ENCODE measurements at regions of chr7 and their contacts with region 1.

Region 1: DNA sequence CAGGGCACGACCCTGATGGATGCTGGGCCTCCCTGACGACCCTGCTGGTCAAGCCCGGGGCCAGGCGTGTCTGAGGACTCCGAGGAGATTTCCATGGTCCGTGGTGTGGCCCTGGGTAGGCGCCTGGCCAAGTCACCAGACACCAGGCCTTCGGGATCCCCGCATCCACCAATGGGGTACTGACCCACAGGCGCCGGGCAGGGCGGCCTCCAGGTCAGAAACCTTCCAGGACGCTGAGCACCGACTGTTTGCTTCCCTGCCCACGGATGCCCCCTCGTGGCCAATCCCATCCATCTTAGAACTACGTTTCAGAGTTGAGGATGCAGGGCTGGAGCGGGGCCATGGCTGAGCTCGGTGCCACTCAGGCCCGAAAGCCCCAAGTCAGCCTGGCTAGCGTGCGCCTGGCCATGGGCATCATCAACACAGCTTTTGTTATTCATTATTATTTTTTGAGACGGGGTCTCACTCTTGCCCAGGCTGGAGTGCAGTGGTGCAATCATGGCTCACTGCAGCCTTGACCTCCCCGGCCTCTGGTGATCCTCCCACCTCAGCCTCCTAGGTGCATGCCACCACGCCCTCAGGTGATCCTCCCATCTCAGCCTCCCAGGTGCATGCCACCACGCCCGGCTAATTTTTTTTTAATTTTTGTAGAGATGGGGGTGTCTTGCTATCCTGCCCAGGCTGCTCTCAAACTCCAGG is 7.1 kb upstream of the AMZ1 start:
- DNase-seq: peak; percentile 87 to 94 (median 92)
- ATAC-seq: peak; percentile 79 to 83
- H3K4me3 ChIP-seq: no peak overlapping the region
- H3K27ac ChIP-seq: no peak overlapping the region
- H3K4me1 ChIP-seq: no peaks in the 10 kb centered on the region
- H3K27me3 ChIP-seq: no peaks in the 10 kb centered on the region

Region 2: DNA sequence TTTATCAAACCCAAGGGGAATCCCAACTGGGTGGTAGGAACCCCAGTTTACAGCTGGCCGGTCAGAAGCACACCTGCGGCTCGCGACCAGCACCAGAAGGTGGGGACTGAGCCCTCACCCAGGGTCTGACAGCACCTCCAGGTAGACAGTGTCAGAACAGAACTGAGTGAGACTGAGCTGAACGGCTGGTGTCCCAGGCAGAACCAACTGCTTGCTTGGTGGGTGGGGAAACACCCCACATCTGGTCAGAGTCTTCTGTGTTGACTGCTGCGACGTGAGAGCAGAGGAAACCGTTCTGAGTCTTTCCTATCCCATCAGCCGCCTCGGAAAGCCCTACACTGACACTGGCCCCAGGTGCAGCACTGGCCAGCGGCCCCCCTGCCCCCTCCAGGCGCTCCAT is 608.9 kb before region 1 on chr7:
- intact Hi-C with region 1: no loop called
- DNase-seq: no peak
- ATAC-seq: no peak
- H3K4me3 ChIP-seq: no peak overlapping the region
- H3K27ac ChIP-seq: no peak overlapping the region
- H3K4me1 ChIP-seq: no peaks in the 10 kb centered on the region
- H3K27me3 ChIP-seq: no peaks in the 10 kb centered on the region

Region 3: GRCh38 chr7:2444476-2444875 is 236.5 kb before region 1 on chr7:
- intact Hi-C with region 1: loop called in 2 of 4 experiments (anchors 5 to 10 kb)
- DNase-seq: peak; percentile 46 to 81 (median 55)
- ATAC-seq: peak; percentile 63 to 69
- H3K4me3 ChIP-seq: no peak overlapping the region
- H3K27ac ChIP-seq: no peak overlapping the region
- H3K4me1 ChIP-seq: no peaks in the 10 kb centered on the region
- H3K27me3 ChIP-seq: no peaks in the 10 kb centered on the region

Region 4: DNA sequence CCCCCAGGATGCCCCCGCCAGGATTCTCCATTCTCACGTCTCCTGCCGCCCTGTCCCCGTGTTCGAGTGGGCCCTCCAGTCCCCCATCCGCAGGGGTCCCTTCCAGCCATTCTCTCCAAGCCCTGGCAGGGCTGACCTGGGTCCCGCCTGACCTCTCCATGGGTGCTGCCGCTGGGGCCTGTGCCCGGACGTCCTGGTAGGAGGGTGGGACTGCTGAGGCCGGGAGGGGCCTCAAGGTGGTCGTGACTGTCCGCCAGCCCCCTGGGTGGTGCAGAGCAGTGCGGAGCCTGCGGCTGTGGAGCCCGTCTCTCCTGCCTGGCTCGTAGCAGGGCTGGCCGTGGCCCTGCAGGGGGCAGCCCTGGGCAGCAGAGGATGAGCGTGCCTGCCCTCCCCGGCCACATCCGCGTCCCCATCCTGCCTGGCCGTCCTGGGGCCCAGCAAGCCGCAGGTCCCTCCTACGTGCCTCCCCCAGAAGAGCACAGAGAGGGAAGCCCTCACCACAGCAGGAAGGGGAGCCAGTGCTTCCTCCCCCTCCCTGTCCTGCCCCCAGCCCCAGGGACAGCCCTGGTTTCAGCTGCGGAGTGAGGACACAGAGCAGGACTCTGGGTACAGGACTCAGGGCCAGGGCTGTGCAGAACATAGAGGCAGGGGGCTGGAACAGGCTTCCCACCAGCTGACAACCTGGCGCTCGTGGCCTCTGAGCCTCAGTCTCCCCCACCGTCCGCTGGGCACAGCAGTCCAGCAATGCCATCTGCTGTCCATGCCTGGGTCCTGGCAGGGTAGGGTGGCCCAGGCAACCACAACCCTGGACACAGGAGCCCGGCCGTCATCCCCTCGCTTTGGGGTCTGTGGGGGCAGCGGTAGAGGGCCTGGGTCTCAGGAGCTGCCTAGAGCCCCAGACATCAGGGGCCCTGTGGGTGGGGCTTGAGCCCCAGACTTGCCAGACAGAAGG is 203.2 kb before region 1 on chr7:
- intact Hi-C with region 1: loop called in 1 of 4 experiments (anchors 10 kb)
- DNase-seq: peak; percentile 65 to 87 (median 87)
- ATAC-seq: peak; percentile 80 to 89
- H3K4me3 ChIP-seq: no peak overlapping the region
- H3K27ac ChIP-seq: no peak overlapping the region
- H3K4me1 ChIP-seq: peaks cover 2% of the 10 kb centered on the region
- H3K27me3 ChIP-seq: no peaks in the 10 kb centered on the region

Region 5: GRCh38 chr7:2567679-2568278 is 113.2 kb before region 1 on chr7:
- intact Hi-C with region 1: loop called in 3 of 4 experiments (anchors 5 kb)
- DNase-seq: peak in 2 of 3 donors; percentile 39 to 60
- ATAC-seq: peak; percentile 73 to 79
- H3K4me3 ChIP-seq: no peak overlapping the region
- H3K27ac ChIP-seq: no peak overlapping the region
- H3K4me1 ChIP-seq: no peaks in the 10 kb centered on the region
- H3K27me3 ChIP-seq: no peaks in the 10 kb centered on the region

Region 6: DNA sequence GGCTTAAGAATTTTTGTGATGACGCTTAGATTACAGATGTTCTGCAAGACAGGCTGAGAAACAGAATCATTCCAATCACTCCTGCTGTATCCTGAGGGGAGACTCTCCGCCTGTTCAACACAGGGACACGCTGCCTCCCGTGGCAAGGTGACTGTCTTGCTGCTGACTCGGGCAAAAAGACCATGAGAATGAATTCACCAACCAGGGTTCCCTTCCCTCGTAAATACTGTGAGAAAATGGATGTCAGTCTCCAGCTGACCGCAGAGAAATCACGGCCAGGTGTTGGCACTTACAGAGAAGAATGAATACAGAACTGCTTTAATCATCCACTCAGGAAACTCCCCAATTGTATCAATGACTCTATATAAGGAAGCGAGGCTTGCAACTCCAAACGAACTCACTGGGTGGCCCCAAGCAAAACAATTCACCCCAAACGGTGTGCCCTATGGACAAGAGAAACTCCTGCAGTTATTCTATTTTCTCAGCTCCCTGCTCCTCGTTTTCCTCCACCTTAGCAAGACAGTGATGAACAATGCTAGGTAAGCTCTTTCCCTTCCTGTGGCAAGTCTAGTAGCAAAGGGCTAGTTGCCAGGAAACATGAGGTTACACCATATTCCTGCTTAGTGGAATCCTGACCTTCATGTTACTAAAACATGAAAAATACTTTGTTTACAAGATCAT is 140.4 kb after region 1 on chr7:
- intact Hi-C with region 1: no loop called
- DNase-seq: peak in 2 of 3 donors; percentile 28 to 31
- ATAC-seq: no peak
- H3K4me3 ChIP-seq: no peak overlapping the region
- H3K27ac ChIP-seq: peak overlapping the region; percentile 29
- H3K4me1 ChIP-seq: peaks cover 30% of the 10 kb centered on the region
- H3K27me3 ChIP-seq: no peaks in the 10 kb centered on the region